Activated T-helper 2 cell treated with anti-CD3 and anti-CD28 coated beads, Interferon-gamma antibody, Interleukin-2, Interleukin-4, amounts not matched to agents 10 μg/mL and 5 μg/mL and 100 μg/mL, durations not matched to agents 14 hours and 24 hours and 36 hours (primary cell): ENCODE measurements at regions of chr9 and their contacts with region 1.

Region 1: GRCh38 chr9:109182940-109183798 is 16.1 kb upstream of the FRRS1L start:
- DNase-seq: peak; percentile 11
- H3K4me3 Mint-ChIP-seq: no peak overlapping the region
- H3K27ac Mint-ChIP-seq: no peak overlapping the region
- H3K4me1 Mint-ChIP-seq: peaks cover 9% of the 10 kb centered on the region
- H3K27me3 Mint-ChIP-seq: peaks cover 15% of the 10 kb centered on the region

Region 2: DNA sequence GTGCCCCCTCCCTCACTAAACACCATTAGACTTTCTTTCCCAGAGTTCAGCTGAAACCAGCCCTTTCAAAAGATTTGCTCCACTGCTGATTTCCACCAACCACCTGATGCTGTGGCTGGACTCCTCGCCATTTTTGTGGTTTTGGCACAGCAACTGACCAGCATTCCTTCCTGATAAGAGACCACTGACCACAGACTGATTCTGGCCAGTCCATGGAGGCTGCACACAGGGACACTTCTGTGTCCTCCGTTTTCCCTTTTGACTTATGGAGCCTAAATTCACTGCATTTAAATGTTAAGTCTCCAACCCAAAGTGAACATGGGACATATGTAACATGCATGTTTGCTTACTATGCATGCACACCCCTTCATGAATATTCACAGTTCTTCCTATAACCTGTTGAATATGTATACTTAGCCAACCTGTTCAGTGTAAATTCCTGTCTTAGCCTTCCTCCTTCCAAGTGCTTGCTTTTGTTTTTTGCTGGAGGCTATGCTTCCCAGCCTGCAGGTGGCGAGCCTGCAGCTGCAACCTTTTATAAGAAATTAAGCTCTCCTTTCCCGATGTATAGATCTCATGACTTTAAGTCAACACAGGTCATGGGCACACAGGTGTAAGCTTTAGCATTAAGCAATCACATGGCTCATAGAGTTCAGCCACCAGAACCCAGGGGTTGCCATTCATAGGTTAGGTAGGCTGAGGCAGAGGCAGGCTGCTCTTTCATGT is 406.1 kb before region 1 on chr9:
- intact Hi-C with region 1: no loop called
- DNase-seq: no peak
- H3K4me3 Mint-ChIP-seq: no peak overlapping the region
- H3K27ac Mint-ChIP-seq: no peak overlapping the region
- H3K4me1 Mint-ChIP-seq: no peaks in the 10 kb centered on the region
- H3K27me3 Mint-ChIP-seq: peaks cover 3% of the 10 kb centered on the region

Region 3: DNA sequence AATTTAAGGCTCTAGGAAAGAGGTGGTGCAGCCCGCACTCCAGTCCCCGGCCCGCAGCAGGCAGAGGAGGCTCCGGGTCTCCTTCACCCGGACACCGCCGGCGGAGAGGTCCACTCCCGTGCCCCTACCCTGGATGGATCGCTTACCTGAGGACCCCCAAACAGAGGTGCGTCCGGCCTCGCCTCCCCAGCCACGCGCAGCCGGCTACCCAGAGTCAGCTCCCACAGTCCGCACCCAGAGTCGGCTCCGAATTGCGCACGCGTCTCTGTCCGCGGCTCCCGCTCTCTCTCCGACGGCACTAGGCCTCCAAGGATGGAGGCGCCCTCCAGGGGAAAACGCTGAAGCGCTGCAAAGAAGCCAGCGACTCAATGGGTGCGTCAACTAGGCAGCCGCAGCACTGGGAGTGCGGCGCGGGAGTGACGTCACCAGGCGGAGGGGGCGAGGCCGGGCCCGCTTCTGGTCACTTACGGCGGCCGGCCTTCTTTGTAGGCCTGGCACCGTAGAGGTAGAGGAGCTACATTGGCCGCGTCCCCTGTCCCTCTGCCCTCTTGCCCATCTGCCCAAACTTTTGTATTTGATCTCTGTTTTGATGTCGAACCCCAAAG is 249.3 kb before region 1 on chr9 and contains the start of gene ELP1:
- intact Hi-C with region 1: loop called (anchors 5 kb)
- DNase-seq: peak; percentile 89
- H3K4me3 Mint-ChIP-seq: peak within 1 kb of the TSS; percentile 98
- H3K27ac Mint-ChIP-seq: peak within 1 kb of the TSS; percentile 94
- H3K4me1 Mint-ChIP-seq: peaks cover 26% of the 10 kb centered on the region
- H3K27me3 Mint-ChIP-seq: no peaks in the 10 kb centered on the region
- total RNA-seq, gene ELP1: 31.7 and 32.7 TPM in 2 replicates

Region 4: GRCh38 chr9:109164042-109164441 is 19.1 kb before region 1 on chr9:
- intact Hi-C with region 1: no loop called
- DNase-seq: no peak
- H3K4me3 Mint-ChIP-seq: no peak overlapping the region
- H3K27ac Mint-ChIP-seq: no peak overlapping the region
- H3K4me1 Mint-ChIP-seq: peaks cover 9% of the 10 kb centered on the region
- H3K27me3 Mint-ChIP-seq: peaks cover 60% of the 10 kb centered on the region

Region 5: GRCh38 chr9:109297899-109298298 is 114.7 kb after region 1 on chr9:
- intact Hi-C with region 1: no loop called
- DNase-seq: no peak
- H3K4me3 Mint-ChIP-seq: no peak overlapping the region
- H3K27ac Mint-ChIP-seq: no peak overlapping the region
- H3K4me1 Mint-ChIP-seq: peaks cover 12% of the 10 kb centered on the region
- H3K27me3 Mint-ChIP-seq: peaks cover 15% of the 10 kb centered on the region

Region 6: GRCh38 chr9:109351032-109351431 is 167.9 kb after region 1 on chr9:
- intact Hi-C with region 1: no loop called
- DNase-seq: no peak
- H3K4me3 Mint-ChIP-seq: no peak overlapping the region
- H3K27ac Mint-ChIP-seq: no peak overlapping the region
- H3K4me1 Mint-ChIP-seq: peaks cover 1% of the 10 kb centered on the region
- H3K27me3 Mint-ChIP-seq: peaks cover 9% of the 10 kb centered on the region